ENCODE measurements at regions of chr6 and their contacts with region 1.

Region 1: DNA sequence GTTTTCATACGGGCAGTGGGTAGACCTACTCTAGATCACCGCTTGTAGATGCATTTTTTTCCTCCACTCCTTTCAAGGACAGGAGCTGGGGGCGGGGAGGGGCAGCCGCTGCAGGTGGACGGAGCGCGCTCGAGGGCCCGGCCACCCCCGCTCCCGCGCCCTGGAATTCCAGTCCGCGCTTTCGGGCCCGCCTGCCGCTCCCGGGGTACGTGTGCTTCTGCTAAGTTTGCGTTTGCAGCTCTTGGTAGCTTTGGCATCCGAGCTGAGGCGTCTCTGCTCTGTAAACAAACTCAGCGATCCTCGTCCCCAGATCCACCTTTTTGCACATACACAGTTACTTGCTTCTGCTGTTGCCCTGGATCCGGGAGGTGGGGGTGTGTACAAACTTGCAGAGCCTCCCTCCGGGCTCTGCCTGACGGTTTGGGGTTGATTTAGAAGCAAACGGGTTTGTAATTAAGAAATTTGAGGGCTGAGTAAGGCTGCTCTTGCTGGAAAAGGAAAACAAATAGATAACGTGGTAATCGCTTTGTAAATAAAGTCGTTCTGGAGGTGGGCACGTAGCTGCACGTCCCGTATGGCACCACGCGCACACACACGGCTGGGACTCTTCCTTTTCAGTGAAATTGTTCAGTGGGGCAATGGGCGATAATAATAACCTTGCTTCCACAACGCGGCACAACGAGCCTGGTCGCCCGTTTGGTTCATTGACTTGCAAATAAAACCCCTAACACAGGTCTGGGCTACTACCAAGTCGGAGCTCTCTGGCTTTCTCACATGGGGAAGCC is 976 bp upstream of the CITED2 start:
- DNase-seq: peak in 1 of 2 donors; percentile 97
- H3K4me3 ChIP-seq: peak overlapping the region; percentile 62 to 97
- H3K27ac ChIP-seq: peak overlapping the region; percentile 98
- H3K4me1 ChIP-seq: peaks cover 23% of the 10 kb centered on the region
- H3K27me3 ChIP-seq: no peaks in the 10 kb centered on the region
- CTCF ChIP-seq: no peak
- POLR2A ChIP-seq: peak in 1 of 2 donors; percentile 74

Region 2: GRCh38 chr6:139539852-139540251 is 164.4 kb after region 1 on chr6:
- intact Hi-C with region 1: loop called (anchors 10 kb)
- DNase-seq: no peak
- H3K4me3 ChIP-seq: no peak overlapping the region
- H3K27ac ChIP-seq: peak overlapping the region; percentile 65
- H3K4me1 ChIP-seq: peaks cover 9% of the 10 kb centered on the region
- H3K27me3 ChIP-seq: no peaks in the 10 kb centered on the region
- CTCF ChIP-seq: no peak
- POLR2A ChIP-seq: no peak

Region 3: GRCh38 chr6:139764498-139764986 is 389.1 kb after region 1 on chr6:
- intact Hi-C with region 1: loop called (anchors 2 kb)
- DNase-seq: no peak
- H3K4me3 ChIP-seq: no peak overlapping the region
- H3K27ac ChIP-seq: peak overlapping the region; percentile 58
- H3K4me1 ChIP-seq: peaks cover 17% of the 10 kb centered on the region
- H3K27me3 ChIP-seq: no peaks in the 10 kb centered on the region
- CTCF ChIP-seq: no peak
- POLR2A ChIP-seq: no peak

Measured in vagina (tissue), 2 donors.